ENCODE measurements at regions of chr16 and their contacts with region 1.

Region 1: DNA sequence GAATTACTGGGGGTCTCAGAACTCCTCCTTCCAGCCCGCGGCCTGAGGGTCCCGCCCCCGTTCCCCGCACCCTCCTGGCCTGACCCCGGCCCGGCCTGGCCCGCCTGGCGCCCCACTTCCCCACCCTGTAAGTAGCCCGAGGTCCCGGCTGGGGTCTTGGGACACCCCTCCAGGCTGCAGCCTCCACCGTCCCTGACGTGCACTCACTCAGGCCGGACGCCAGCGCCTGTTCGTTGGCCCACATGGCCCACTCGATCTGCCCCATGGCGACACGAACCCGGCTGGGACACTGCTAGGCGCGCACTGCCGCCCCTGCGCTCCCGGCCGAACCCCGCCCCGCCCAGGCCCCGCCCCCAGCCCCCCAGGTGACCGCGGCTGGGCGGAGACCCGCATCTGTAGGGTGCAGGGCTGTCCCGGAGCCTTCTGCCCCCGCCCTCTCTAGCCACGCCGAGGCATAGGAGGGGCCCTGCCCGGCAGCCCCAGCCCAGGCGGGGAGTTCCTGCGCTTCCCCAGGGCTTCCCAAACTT is at the start of gene CYBA:
- DNase-seq: peak; percentile 92
- H3K4me3 Mint-ChIP-seq: peak within 1 kb of the TSS; percentile 90
- H3K27ac Mint-ChIP-seq: peak within 1 kb of the TSS; percentile 96
- H3K4me1 Mint-ChIP-seq: peaks cover 26% of the 10 kb centered on the region
- H3K27me3 Mint-ChIP-seq: no peaks in the 10 kb centered on the region
- total RNA-seq, gene CYBA: 580 to 588 TPM

Region 2: GRCh38 chr16:88633684-88634140 is 17.1 kb before region 1 on chr16:
- CTCF ChIA-PET with region 1: no interaction called
- POLR2A ChIA-PET with region 1: interaction called, 34 read pairs
- DNase-seq: peak; percentile 71
- H3K4me3 Mint-ChIP-seq: peak overlapping the region; percentile 76
- H3K27ac Mint-ChIP-seq: peak overlapping the region; percentile 62
- H3K4me1 Mint-ChIP-seq: peaks cover 46% of the 10 kb centered on the region
- H3K27me3 Mint-ChIP-seq: peaks cover 20% of the 10 kb centered on the region

Region 3: GRCh38 chr16:88639231-88640038 is 11.4 kb before region 1 on chr16:
- CTCF ChIA-PET with region 1: no interaction called
- POLR2A ChIA-PET with region 1: interaction called, 34 read pairs
- DNase-seq: no peak
- H3K4me3 Mint-ChIP-seq: no peak overlapping the region
- H3K27ac Mint-ChIP-seq: no peak overlapping the region
- H3K4me1 Mint-ChIP-seq: peaks cover 44% of the 10 kb centered on the region
- H3K27me3 Mint-ChIP-seq: peaks cover 35% of the 10 kb centered on the region

Region 4: DNA sequence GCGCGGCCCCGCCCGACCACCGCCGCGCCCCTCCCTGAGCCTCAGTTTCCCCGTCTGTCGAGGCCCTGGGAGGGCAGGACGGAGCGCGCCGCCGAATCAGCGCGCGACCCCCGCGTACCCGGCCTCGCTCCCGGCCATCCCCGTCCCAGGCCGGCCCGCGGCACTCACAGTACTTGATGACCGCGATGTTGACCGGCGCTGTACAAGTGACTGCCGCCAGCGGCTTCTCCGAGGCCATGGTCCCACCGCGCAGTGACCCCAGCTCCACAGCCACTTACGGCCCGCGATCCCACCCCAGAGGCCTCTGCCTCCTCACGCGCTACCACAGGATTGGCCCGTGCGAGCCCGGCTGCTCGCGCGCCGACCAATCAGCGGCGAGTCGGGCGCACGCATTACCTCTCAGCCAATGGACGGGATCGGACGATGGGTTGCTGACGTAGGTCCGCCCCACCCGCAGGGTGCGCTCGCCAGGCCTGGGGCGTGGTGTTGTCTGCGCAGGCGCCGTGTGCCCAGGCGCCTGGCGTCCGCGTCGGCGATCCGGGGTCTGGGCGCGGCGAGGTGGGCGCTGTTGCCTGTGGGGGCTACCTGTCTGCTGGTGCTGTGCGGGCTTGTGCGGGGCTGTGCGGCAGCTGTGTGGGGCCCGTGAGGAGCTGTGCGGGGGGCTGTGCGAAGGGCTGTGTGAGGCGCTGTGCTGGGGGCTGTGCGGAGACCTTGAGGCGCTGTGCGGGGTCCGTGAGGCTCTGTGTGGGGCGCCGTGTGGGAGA is 12.2 kb after region 1 on chr16 and contains the start of gene MVD:
- CTCF ChIA-PET with region 1: interaction called, 4 read pairs
- POLR2A ChIA-PET with region 1: interaction called, 10 read pairs
- DNase-seq: peak; percentile 97
- H3K4me3 Mint-ChIP-seq: peak within 1 kb of the TSS; percentile 91
- H3K27ac Mint-ChIP-seq: peak within 1 kb of the TSS; percentile 86
- H3K4me1 Mint-ChIP-seq: peaks cover 25% of the 10 kb centered on the region
- H3K27me3 Mint-ChIP-seq: no peaks in the 10 kb centered on the region
- total RNA-seq, gene MVD: 134 to 139 TPM

Region 5: DNA sequence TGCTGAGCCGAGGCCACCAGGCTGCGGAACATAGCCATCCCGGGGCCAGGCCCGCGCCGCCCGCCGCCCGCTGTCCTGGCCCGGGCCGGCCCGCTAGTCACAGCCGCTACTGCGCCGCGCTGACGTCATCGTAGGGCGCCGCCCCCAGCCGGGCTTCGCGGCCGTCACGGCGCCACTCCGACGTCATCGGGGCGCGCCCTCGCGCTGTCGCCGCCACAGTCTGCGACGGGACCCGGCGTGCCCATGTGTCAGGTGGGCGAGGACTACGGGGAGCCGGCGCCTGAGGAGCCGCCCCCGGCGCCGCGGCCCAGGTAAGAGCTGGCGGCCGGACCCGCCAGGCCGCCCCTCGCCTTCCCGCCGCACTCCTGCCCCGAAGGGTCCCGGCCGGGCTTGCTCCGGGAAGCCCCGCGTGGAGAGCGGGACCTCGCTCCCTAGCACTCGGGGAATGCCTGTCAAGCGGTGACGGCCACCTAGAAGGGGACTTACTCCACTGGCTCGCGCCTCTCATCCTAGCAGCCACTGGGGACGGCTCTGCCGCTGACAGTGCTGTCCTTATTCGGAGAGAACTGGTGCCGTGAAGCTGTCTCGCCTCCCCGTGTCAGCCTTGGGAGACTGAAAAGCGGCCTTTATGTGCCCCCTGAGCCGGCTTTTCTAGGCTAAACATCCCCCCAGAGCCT is 55.6 kb after region 1 on chr16 and contains the starts of genes CTU2 and RNF166:
- CTCF ChIA-PET with region 1: no interaction called
- POLR2A ChIA-PET with region 1: interaction called, 38 read pairs
- DNase-seq: peak; percentile 93
- H3K4me3 Mint-ChIP-seq: peak within 1 kb of the TSS; percentile 95
- H3K27ac Mint-ChIP-seq: peak within 1 kb of the TSS; percentile 98
- H3K4me1 Mint-ChIP-seq: peaks cover 44% of the 10 kb centered on the region
- H3K27me3 Mint-ChIP-seq: no peaks in the 10 kb centered on the region
- total RNA-seq, gene CTU2: 16.5 to 17.3 TPM
- total RNA-seq, gene RNF166: 155 to 156 TPM

Region 6: DNA sequence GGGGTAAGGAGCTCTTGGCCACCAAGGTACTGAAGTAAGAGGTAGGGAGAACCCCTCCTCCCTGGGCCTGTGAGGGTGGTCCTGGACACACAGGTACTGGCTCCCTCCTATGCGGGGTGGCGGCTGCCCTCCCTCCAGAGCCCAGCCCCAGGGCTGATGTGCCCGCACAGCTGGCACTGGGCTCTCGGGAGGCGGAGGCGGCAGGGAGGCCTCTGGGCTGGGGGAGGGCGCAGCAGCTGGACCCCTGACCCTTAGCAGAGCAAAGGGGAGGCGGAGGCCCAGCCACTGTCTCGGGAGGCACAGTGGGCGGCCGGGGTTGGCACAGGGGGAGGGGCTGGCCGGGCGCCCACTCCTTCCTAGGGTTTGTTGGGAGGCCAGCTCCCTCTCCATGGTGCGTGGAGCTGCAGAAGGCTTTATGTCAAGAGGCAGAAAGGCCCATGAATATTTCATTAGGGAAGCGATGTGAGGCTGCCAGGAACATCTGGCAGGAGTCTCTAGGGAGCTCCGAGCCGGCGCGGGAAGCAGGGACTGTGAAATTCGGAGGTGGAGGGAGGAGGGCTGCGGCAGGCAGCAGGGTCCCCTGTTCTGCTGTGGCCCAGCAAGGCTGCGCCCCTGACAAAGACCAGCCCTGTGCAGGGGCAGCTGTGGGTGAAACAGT is 398.8 kb after region 1 on chr16:
- CTCF ChIA-PET with region 1: no interaction called
- POLR2A ChIA-PET with region 1: no interaction called
- DNase-seq: no peak
- H3K4me3 Mint-ChIP-seq: no peak overlapping the region
- H3K27ac Mint-ChIP-seq: no peak overlapping the region
- H3K4me1 Mint-ChIP-seq: peaks cover 2% of the 10 kb centered on the region
- H3K27me3 Mint-ChIP-seq: no peaks in the 10 kb centered on the region